Activated T-helper 1 cell treated with anti-CD3 and anti-CD28 coated beads, Interleukin-12 subunit alpha, Interleukin-12 subunit beta, Interleukin-2, Interleukin-4 antibody, amounts not matched to agents 30 ng/mL and 10 ng/mL and 1 ng/mL, durations not matched to agents 14 hours and 24 hours and 36 hours (primary cell): ENCODE measurements at regions of chr4 and their contacts with region 1.

Region 1: GRCh38 chr4:6783053-6783981 is 790 bp downstream of the KIAA0232 start:
- DNase-seq: peak; percentile 86
- H3K4me3 Mint-ChIP-seq: peak overlapping the region; percentile 85
- H3K27ac Mint-ChIP-seq: peak overlapping the region; percentile 86
- H3K4me1 Mint-ChIP-seq: peaks cover 57% of the 10 kb centered on the region
- H3K27me3 Mint-ChIP-seq: no peaks in the 10 kb centered on the region

Region 2: DNA sequence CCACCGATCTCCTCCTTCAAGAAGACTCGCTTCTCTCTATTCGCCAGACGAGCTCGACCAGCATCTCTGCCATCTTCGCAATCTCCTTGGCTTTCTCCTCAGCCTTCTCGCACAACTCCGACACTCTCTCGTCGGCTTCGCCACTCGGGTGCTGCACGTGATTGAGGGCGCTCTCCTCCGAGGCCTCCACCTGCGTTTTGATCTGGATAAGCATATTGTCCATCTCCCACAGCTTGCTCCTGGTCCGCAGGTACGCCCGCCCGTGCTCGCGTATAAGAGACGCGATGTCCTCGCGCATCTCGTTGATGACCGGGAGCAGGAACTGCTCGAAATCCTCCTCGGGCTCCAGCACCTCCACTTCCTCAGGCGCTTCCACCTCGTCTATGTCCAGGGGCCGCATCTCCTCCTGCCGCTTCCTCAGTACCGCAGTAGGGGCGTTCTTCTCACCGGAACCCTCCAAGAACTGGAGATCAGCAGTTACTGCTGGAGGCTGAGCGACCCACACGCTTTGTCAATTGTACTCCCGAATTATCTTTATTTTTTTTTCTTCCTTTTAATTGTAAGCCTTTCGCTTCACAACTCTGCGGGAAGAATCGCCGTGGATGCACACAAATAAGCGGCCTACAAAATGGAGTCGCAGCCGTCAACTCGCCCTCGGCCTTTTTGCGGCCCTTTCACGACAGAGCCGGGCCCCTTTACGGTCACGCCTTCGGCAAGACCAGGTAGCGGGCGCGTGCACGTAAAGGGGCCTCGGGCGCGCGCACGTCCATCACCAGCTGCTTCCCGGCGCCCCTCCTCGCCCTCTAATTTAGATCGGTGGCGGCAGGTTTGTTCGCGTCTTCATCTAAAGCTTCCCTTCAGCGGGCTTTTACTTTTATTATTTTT is 73.8 kb before region 1 on chr4 and contains the start of gene MRFAP1L1:
- intact Hi-C with region 1: loop called (anchors 2 kb)
- DNase-seq: peak; percentile 95
- H3K4me3 Mint-ChIP-seq: peak within 1 kb of the TSS; percentile 98
- H3K27ac Mint-ChIP-seq: peak within 1 kb of the TSS; percentile 95
- H3K4me1 Mint-ChIP-seq: peaks cover 62% of the 10 kb centered on the region
- H3K27me3 Mint-ChIP-seq: peaks cover 3% of the 10 kb centered on the region
- total RNA-seq, gene MRFAP1L1: 51.7 and 53.9 TPM in 2 replicates

Region 3: GRCh38 chr4:6716018-6716911 is 67.1 kb before region 1 on chr4 and contains the start of gene BLOC1S4:
- intact Hi-C with region 1: loop called (anchors 1 kb)
- DNase-seq: peak; percentile 87
- H3K4me3 Mint-ChIP-seq: peak within 1 kb of the TSS; percentile 93
- H3K27ac Mint-ChIP-seq: peak within 1 kb of the TSS; percentile 88
- H3K4me1 Mint-ChIP-seq: peaks cover 27% of the 10 kb centered on the region
- H3K27me3 Mint-ChIP-seq: peaks cover 8% of the 10 kb centered on the region
- total RNA-seq, gene BLOC1S4: 21.5 and 23.6 TPM in 2 replicates

Region 4: GRCh38 chr4:6855692-6856297 is 72.5 kb after region 1 on chr4:
- intact Hi-C with region 1: loop called (anchors 5 kb)
- DNase-seq: peak; percentile 12
- H3K4me3 Mint-ChIP-seq: no peak overlapping the region
- H3K27ac Mint-ChIP-seq: peak overlapping the region; percentile 85
- H3K4me1 Mint-ChIP-seq: peaks cover 27% of the 10 kb centered on the region
- H3K27me3 Mint-ChIP-seq: no peaks in the 10 kb centered on the region

Region 5: DNA sequence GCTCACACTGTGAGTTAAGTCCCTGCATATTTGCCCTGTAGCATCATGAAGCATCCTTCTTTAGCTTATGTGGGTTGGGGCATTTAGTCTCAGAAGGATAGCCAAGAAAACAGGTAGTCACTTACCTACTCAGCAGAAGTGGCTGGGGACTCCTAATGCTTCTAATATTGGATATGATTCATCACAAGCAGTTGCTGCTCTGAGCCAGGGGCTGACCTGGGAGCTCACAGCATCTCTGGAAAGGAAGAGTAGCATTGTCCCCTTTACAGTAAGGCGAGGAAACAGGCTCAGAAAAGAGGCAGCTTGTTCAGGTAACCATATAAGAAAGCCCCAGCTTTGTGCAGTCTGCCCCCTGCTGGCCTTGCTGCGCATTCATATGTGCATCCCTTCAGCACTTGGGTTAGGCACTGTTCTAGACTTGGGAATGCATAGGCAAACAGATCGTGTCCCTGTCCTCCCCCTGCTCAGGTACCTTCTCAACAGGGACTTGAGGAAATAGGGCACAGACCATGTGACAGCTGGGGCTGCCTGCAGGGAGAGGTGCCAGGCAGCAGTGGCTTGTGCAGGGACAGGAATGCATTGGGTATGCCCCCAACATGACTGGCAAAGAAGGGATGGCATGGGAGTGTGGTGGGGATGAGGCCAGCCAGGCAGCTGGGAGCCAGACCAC is 90.6 kb after region 1 on chr4:
- intact Hi-C with region 1: loop called (anchors 1 kb)
- DNase-seq: peak; percentile 64
- H3K4me3 Mint-ChIP-seq: no peak overlapping the region
- H3K27ac Mint-ChIP-seq: no peak overlapping the region
- H3K4me1 Mint-ChIP-seq: peaks cover 16% of the 10 kb centered on the region
- H3K27me3 Mint-ChIP-seq: no peaks in the 10 kb centered on the region

Region 6: GRCh38 chr4:7042697-7043464 is 259.6 kb after region 1 on chr4 and contains the start of gene TADA2B:
- intact Hi-C with region 1: loop called (anchors 1 kb)
- DNase-seq: peak; percentile 93
- H3K4me3 Mint-ChIP-seq: peak within 1 kb of the TSS; percentile 95
- H3K27ac Mint-ChIP-seq: peak within 1 kb of the TSS; percentile 86
- H3K4me1 Mint-ChIP-seq: peaks cover 48% of the 10 kb centered on the region
- H3K27me3 Mint-ChIP-seq: peaks cover 8% of the 10 kb centered on the region
- total RNA-seq, gene TADA2B: 15.2 and 16.8 TPM in 2 replicates

Region 7: GRCh38 chr4:7101692-7102515 is 318.6 kb after region 1 on chr4:
- intact Hi-C with region 1: loop called (anchors 1 kb)
- DNase-seq: peak; percentile 29
- H3K4me3 Mint-ChIP-seq: peak overlapping the region; percentile 89
- H3K27ac Mint-ChIP-seq: no peak overlapping the region
- H3K4me1 Mint-ChIP-seq: peaks cover 14% of the 10 kb centered on the region
- H3K27me3 Mint-ChIP-seq: peaks cover 15% of the 10 kb centered on the region